Mammary epithelial cell (primary cell): ENCODE measurements at regions of chr12 and their contacts with region 1.

Region 1: DNA sequence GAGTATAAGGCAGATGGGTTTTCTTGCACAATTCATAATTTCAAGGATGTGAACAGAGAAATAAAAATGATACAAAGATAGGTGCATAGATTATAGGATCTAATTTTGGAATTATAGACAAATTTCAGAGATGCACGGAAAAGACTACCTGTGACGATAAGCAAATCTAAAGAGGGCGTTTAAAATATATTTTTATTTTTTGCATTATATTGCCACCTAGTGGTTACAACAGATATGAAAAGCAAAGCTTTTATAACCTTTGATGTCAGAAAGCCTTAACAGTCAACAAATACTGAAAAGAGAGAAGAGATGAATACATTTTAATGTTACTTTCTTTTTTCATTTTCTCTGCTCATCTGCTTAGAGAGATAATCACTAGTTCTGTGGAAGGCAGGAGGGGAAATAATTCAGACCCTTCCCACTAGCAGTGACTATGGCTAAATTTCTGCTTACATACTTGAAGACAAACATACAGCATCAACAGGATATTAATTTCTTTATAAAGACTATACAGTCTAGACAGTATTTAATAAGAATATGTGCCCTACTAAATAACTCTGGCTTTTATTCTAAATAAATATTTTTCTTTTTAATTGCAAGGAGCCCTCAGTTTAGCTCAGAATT is 46.3 kb downstream of the NTS start:
- DNase-seq: peak; percentile 12
- H3K4me3 ChIP-seq: no peak overlapping the region
- H3K27ac ChIP-seq: no peak overlapping the region
- H3K4me1 ChIP-seq: no peaks in the 10 kb centered on the region
- H3K27me3 ChIP-seq: no peaks in the 10 kb centered on the region
- CTCF ChIP-seq: peak; percentile 49 to 50

Region 2: GRCh38 chr12:85076688-85077430 is 843.6 kb before region 1 on chr12:
- CTCF ChIA-PET with region 1: interaction called, 4 read pairs
- dilution Hi-C with region 1: no loop called
- in situ Hi-C with region 1: no loop called
- intact Hi-C with region 1: loop called (anchors 10 kb)
- DNase-seq: peak; percentile 89
- H3K4me3 ChIP-seq: no peak overlapping the region
- H3K27ac ChIP-seq: no peak overlapping the region
- H3K4me1 ChIP-seq: no peaks in the 10 kb centered on the region
- H3K27me3 ChIP-seq: no peaks in the 10 kb centered on the region
- CTCF ChIP-seq: peak; percentile 34 to 62

Region 3: DNA sequence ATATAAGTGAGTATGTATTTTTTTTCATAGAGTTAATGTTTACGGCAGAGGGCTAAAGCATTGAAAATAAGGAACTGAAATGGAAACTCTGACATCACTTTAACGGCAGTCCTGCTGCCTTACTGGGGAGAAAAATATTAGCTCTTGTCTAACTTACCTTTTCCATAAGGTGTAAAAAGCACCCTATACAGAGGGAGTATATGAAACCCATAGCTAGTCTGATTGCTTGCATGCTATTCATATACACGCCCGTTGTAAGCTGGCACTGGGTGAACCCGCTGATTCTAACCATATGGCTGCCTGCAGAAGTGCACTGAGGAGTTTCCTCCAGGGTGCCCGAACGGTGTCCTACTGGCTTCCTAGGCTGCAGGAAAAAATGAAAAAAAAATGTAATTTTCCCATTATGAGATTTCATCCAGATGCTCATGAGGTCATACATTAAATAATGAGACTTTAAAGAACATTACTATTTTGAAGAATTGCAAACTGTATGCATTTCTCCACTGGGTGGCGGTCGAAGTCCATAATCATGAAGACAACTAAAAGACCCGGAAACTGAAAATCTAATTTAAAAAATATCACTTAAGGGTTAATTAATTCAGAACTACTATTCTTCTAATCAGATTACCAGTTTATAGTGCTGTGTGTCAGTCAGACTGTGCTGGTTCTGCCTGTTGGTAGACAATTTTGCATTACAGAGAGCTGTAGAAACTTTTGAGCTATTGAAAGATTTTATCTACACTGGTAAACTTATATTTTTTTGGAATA is 495.7 kb before region 1 on chr12:
- CTCF ChIA-PET with region 1: no interaction called
- dilution Hi-C with region 1: no loop called
- in situ Hi-C with region 1: no loop called
- intact Hi-C with region 1: loop called (anchors 2 kb)
- DNase-seq: no peak
- H3K4me3 ChIP-seq: no peak overlapping the region
- H3K27ac ChIP-seq: no peak overlapping the region
- H3K4me1 ChIP-seq: no peaks in the 10 kb centered on the region
- H3K27me3 ChIP-seq: peaks cover 3% of the 10 kb centered on the region
- CTCF ChIP-seq: peak; percentile 53 to 55

Region 4: GRCh38 chr12:85468356-85469157 is 451.9 kb before region 1 on chr12:
- CTCF ChIA-PET with region 1: interaction called, 4 read pairs
- dilution Hi-C with region 1: no loop called
- in situ Hi-C with region 1: no loop called
- intact Hi-C with region 1: loop called (anchors 1 kb)
- DNase-seq: peak; percentile 70
- H3K4me3 ChIP-seq: peak overlapping the region in 2 of 3 experiments; percentile 15 to 16
- H3K27ac ChIP-seq: peak overlapping the region; percentile 31
- H3K4me1 ChIP-seq: peaks cover 43% of the 10 kb centered on the region
- H3K27me3 ChIP-seq: no peaks in the 10 kb centered on the region
- CTCF ChIP-seq: peak; percentile 81 to 84

Region 5: DNA sequence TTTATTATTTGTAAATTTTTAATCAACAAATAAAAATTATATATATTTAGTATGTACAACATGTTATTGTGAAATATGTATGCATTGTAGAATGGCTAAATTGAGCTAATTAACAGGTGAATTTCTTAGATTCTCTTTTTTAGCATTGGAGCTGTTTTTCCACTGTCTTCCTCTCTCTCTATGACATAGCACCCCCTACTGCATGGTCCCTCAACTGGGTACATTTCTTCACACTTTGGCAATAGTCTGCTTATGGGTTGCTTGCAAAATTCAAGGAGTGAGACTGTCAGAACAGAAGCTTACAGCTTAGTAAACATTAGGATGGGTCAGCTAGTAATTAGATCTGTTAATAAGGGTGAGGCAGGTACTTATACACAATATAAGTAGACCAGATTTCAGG is 994.3 kb after region 1 on chr12:
- CTCF ChIA-PET with region 1: no interaction called
- dilution Hi-C with region 1: no loop called
- in situ Hi-C with region 1: no loop called
- intact Hi-C with region 1: loop called (anchors 10 kb)
- DNase-seq: peak; percentile 32
- H3K4me3 ChIP-seq: no peak overlapping the region
- H3K27ac ChIP-seq: no peak overlapping the region
- H3K4me1 ChIP-seq: no peaks in the 10 kb centered on the region
- H3K27me3 ChIP-seq: no peaks in the 10 kb centered on the region
- CTCF ChIP-seq: peak; percentile 50 to 74